WTC11 (cell line): ENCODE measurements at regions of chr14 and their contacts with region 1.

Region 1: DNA sequence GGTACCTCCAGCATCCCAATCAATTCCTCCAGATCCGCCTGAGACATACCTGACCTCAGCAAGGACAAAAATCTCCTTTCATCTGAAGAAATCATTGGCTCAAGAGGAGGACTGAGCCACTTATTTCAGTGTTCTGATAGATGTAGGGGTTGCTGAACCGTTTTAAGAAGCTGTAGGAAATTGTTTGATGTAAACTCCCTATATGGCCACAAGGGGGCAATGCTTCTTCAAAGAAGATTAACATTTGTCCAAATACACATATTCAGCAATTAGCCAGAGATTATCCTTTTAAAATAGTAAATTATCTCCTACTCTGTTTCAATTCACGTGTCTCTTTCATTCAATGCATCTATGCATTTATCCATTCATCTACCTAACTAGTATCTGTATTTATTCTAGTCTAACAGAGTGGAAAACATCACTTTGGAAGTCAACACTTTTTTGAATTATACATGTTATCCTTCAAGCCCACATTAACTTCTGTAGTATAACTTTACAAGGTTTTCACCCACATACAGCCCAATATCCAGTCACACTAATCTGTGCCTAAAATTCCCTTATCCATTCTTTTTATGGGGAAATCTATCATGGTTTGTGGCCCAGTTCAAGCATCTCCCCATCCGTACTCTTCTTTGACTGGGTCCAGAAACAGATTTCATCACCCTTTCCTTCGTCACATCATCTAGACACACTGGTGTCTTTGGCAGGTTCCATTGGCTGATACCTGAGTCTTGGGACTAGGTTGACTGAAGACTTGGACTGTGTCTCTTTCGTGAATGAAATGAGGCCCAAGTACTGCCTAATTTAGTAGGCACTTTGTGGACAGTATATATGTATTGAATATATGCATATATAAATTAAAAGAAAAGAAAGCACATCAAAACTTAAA is 411.0 kb upstream of the OR4E1 start:
- DNase-seq: no peak
- ATAC-seq: peak; percentile 57
- H3K4me3 Mint-ChIP-seq: no peak overlapping the region
- H3K27ac Mint-ChIP-seq: no peak overlapping the region
- H3K4me1 Mint-ChIP-seq: peaks cover 4% of the 10 kb centered on the region
- H3K27me3 Mint-ChIP-seq: 0 out of 2 replicates have a peak, but pooled peaks cover 2% of the 10 kb centered on the region
- CTCF ChIP-seq: peak; percentile 70

Region 2: DNA sequence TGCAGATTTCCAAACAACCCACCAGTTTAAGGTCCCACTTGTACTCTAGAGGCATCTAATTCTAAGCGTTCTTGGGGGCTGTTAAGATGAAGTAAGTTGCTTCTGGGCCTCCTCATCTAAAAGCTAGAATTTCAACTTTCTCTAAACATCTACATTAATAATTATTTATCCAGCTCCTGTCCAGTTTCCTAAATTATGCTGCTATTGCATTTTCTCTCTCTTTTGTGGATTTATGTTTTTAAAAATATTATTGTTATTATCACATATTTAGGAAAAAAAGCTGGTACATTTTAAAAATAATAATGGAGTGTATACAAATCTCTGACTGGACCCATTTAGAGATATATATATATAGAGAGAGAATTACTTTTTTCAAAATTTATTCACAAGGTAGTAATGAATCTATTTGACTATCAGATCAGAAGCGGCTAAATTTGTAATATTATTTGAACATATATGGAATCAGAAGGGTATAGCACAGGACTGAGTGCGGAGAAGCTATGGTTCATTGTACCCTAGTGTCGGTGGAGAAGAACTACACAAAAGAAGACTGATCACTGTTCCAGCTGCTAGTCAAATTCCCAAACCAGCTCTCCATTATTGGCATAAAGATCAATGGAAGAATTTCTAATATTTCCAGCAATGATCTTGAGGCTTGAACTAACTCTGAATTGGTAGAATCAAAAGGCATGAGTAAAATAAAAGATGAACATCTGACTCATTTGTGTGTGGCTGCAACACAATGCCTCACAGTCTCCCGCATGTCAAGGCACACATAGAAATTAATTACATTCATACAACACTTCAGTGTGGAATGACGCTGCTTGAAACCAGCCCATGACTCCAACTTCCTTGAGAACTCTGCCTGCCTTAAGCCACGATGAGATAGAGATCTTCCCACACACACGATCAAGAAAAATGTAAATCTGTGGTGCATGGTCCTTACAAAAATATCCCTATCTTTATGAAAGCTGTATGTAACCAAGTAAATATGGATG is 22.4 kb after region 1 on chr14:
- CTCF ChIA-PET with region 1: interaction called, 11 read pairs
- POLR2A ChIA-PET with region 1: no interaction called
- DNase-seq: no peak
- ATAC-seq: peak; percentile 28; the same call in 1 of the 2 replicates
- H3K4me3 Mint-ChIP-seq: no peak overlapping the region
- H3K27ac Mint-ChIP-seq: no peak overlapping the region
- H3K4me1 Mint-ChIP-seq: no peaks in the 10 kb centered on the region
- H3K27me3 Mint-ChIP-seq: no peaks in the 10 kb centered on the region; the same call in 1 of the 2 replicates
- CTCF ChIP-seq: no peak